A673 (cell line): ENCODE measurements at regions of chr13 and their contacts with region 1.

Region 1: DNA sequence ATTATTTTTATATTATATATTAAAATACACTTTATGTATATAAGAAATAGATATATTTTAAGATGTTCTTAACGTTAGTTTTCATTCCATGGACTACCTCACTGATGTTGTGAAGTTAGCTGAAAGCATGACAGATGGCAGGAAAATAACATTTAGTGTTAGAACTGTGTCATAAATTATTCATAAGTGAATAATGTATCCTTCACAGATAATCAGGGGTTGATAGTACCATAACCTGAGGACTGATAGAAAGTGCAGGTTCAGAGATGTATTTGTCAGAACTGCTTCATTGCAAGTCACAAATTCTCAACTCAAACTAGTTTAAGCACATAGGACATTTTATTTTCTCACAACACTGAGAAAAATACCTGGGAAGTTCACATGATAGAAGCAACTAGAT is 14.6 kb upstream of the DIAPH3 start:
- DNase-seq: no peak
- H3K4me3 ChIP-seq: no peak overlapping the region
- H3K27ac ChIP-seq: no peak overlapping the region
- H3K4me1 ChIP-seq: no peaks in the 10 kb centered on the region
- H3K27me3 ChIP-seq: no peaks in the 10 kb centered on the region
- CTCF ChIP-seq: no peak

Region 2: DNA sequence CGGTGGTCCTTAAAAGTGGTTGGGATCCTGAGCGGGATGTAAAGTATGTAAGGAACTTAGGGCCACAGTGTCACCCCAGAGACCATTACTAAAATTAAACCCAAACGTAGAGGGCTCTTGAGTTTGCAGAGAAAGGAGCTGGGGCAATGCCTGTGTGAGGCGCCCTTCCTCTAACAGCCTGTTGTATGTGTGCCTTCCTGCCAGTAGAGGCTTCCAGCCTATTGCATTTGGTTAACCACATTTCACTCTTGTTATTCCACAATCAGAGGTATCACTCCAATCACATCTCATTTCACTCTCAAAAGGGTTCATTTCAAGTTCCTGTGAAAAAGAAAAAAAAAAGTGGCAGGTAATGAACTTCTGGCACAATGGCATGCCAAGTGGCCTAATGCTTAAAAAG is 44.0 kb before region 1 on chr13:
- CTCF ChIA-PET with region 1: no interaction called
- POLR2A ChIA-PET with region 1: no interaction called
- intact Hi-C with region 1: no loop called
- DNase-seq: peak; percentile 20
- H3K4me3 ChIP-seq: no peak overlapping the region
- H3K27ac ChIP-seq: no peak overlapping the region
- H3K4me1 ChIP-seq: peaks cover 12% of the 10 kb centered on the region
- H3K27me3 ChIP-seq: no peaks in the 10 kb centered on the region
- CTCF ChIP-seq: peak; percentile 39

Region 3: GRCh38 chr13:60158321-60158801 is 20.0 kb before region 1 on chr13:
- CTCF ChIA-PET with region 1: no interaction called
- POLR2A ChIA-PET with region 1: interaction called, 15 read pairs
- intact Hi-C with region 1: no loop called
- DNase-seq: peak; percentile 61
- H3K4me3 ChIP-seq: no peak overlapping the region
- H3K27ac ChIP-seq: peak overlapping the region; percentile 74
- H3K4me1 ChIP-seq: peaks cover 27% of the 10 kb centered on the region
- H3K27me3 ChIP-seq: no peaks in the 10 kb centered on the region
- CTCF ChIP-seq: no peak

Region 4: DNA sequence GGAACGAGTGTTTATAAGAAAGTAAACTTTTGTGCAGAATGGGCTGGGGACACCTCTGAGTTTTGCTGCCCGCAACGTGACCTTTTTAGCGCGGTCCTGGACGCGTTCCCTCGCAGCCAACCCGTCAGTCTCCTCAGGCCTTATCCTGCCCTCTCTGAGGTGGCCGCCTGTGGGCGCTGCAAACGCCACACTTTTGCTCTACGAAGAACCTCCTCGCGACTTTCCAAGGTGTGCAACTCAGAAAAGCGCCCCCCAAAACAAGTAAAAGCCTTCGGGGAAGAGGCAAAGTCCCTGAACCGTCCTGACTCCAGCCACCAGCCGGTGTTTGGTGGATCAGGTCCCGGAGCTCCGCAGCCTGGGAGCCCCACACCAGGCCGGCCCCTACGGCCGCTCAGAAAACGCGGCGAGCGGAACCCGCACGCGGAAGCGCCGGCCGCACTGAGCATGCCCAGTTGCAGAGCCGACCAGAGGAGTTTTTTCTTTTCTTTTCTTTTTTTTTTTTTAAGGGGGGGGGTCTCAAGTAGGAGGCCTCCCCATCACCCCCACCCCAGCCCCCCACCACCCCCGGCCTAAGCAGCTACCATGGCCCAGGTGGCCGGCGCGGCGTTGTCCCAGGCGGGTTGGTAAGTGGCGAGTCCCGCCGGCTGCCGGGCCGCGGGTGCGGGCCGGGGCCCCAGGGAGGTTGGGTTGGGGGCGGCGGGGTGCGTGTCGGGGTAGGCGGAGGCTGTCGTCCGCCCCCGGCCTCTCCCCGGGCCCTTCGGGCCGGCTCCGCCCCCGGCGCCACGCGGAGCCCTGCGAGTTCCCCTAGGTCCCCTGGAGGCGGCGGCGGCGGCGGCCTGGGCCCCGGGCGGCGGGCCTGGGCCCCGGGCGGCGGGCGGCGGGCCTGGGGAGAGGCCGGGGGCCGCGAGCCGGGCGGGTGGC is 218.7 kb after region 1 on chr13 and contains the start of gene TDRD3:
- CTCF ChIA-PET with region 1: no interaction called
- POLR2A ChIA-PET with region 1: no interaction called
- intact Hi-C with region 1: no loop called
- DNase-seq: peak; percentile 91
- H3K4me3 ChIP-seq: peak within 1 kb of the TSS; percentile 62
- H3K27ac ChIP-seq: peak within 1 kb of the TSS; percentile 93
- H3K4me1 ChIP-seq: peaks cover 27% of the 10 kb centered on the region
- H3K27me3 ChIP-seq: no peaks in the 10 kb centered on the region
- CTCF ChIP-seq: peak; percentile 84
- total RNA-seq, gene TDRD3: 30.7 and 34.1 TPM in 2 replicates